ENCODE measurements at regions of chr16 and their contacts with region 1.

Region 1: GRCh38 chr16:56589141-56590039 is at the start of gene MT3:
- DNase-seq: peak in 1 of 2 experiments; percentile 64
- H3K4me3 ChIP-seq: peak within 1 kb of the TSS; percentile 28 to 65 (median 38)
- H3K27ac ChIP-seq: no peak within 1 kb of the TSS
- H3K4me1 ChIP-seq: peaks cover 0 to 13% (median 4%) of the 10 kb centered on the region in 4 experiments; a peak in 5 of 7 replicates
- H3K27me3 ChIP-seq: peaks cover 20 to 52% (median 43%) of the 10 kb centered on the region in 4 experiments
- CTCF ChIP-seq: no peak
- EP300 ChIP-seq: no peak
- POLR2A ChIP-seq: no peak
- RAD21 ChIP-seq: no peak
- total RNA-seq, gene MT3: not detected in 2 replicates

Region 2: GRCh38 chr16:56576585-56577293 is 12.7 kb before region 1 on chr16:
- CTCF ChIA-PET with region 1: interaction called, 10 read pairs
- POLR2A ChIA-PET with region 1: interaction called, 3 read pairs
- DNase-seq: peak; percentile 67 to 94
- H3K4me3 ChIP-seq: no peak overlapping the region
- H3K27ac ChIP-seq: no peak overlapping the region
- H3K4me1 ChIP-seq: no peaks in the 10 kb centered on the region
- H3K27me3 ChIP-seq: no peaks in the 10 kb centered on the region; a peak in 1 of 7 replicates
- CTCF ChIP-seq: peak; percentile 92 to 98 (median 93)
- EP300 ChIP-seq: 0 out of 3 replicates have a peak, but pooled peaks of 1 of the 2 experiments have one; percentile 8
- POLR2A ChIP-seq: no peak
- RAD21 ChIP-seq: peak; percentile 97 to 99

Measured in H1 (cell line).